Naive thymus-derived CD4-positive, alpha-beta T cell (primary cell): ENCODE measurements at regions of chr20 and their contacts with region 1.

Region 1: GRCh38 chr20:3156811-3157619 is 2.6 kb downstream of the FASTKD5 start:
- DNase-seq: peak in 7 of 9 donors; percentile 34 to 70 (median 57)
- ATAC-seq: peak; percentile 86
- H3K4me3 ChIP-seq: peak overlapping the region; percentile 27
- H3K4me3 Mint-ChIP-seq: peak overlapping the region; percentile 69 to 99 (median 86)
- H3K27ac ChIP-seq: peak overlapping the region; percentile 50
- H3K27ac Mint-ChIP-seq: peak overlapping the region; percentile 81 to 99 (median 89)
- H3K4me1 ChIP-seq: peaks cover 18 to 35% of the 10 kb centered on the region in 2 donors
- H3K4me1 Mint-ChIP-seq: peaks cover 46 to 82% (median 67%) of the 10 kb centered on the region in 7 donors
- H3K27me3 ChIP-seq: no peaks in the 10 kb centered on the region
- H3K27me3 Mint-ChIP-seq: no peaks in the 10 kb centered on the region

Region 2: GRCh38 chr20:2101865-2102584 is 1055.0 kb before region 1 on chr20:
- CTCF ChIA-PET with region 1: no interaction called
- POLR2A ChIA-PET with region 1: no interaction called
- intact Hi-C with region 1: loop called in 1 of 2 experiments (anchors 5 kb)
- DNase-seq: peak; percentile 82 to 94 (median 92)
- ATAC-seq: peak; percentile 88
- H3K4me3 ChIP-seq: peak overlapping the region; percentile 88
- H3K4me3 Mint-ChIP-seq: peak overlapping the region; percentile 90 to 97 (median 96)
- H3K27ac ChIP-seq: peak overlapping the region; percentile 96
- H3K27ac Mint-ChIP-seq: peak overlapping the region; percentile 99 to 100 (median 100)
- H3K4me1 ChIP-seq: peaks cover 29 to 38% of the 10 kb centered on the region in 2 donors
- H3K4me1 Mint-ChIP-seq: peaks cover 36 to 58% (median 44%) of the 10 kb centered on the region in 7 donors
- H3K27me3 ChIP-seq: no peaks in the 10 kb centered on the region
- H3K27me3 Mint-ChIP-seq: peaks cover 0 to 4% (median 0%) of the 10 kb centered on the region in 5 donors

Region 3: GRCh38 chr20:3037654-3038053 is 119.4 kb before region 1 on chr20:
- CTCF ChIA-PET with region 1: no interaction called
- POLR2A ChIA-PET with region 1: no interaction called
- intact Hi-C with region 1: no loop called
- DNase-seq: no peak
- ATAC-seq: no peak
- H3K4me3 ChIP-seq: no peak overlapping the region
- H3K4me3 Mint-ChIP-seq: no peak overlapping the region
- H3K27ac ChIP-seq: no peak overlapping the region
- H3K27ac Mint-ChIP-seq: no peak overlapping the region
- H3K4me1 ChIP-seq: no peaks in the 10 kb centered on the region
- H3K4me1 Mint-ChIP-seq: peaks cover 0 to 15% (median 4%) of the 10 kb centered on the region in 7 donors
- H3K27me3 ChIP-seq: no peaks in the 10 kb centered on the region
- H3K27me3 Mint-ChIP-seq: no peaks in the 10 kb centered on the region

Region 4: GRCh38 chr20:3059489-3059888 is 97.5 kb before region 1 on chr20:
- CTCF ChIA-PET with region 1: no interaction called
- POLR2A ChIA-PET with region 1: interaction called, 11 read pairs
- intact Hi-C with region 1: no loop called
- DNase-seq: no peak
- ATAC-seq: no peak
- H3K4me3 ChIP-seq: no peak overlapping the region
- H3K4me3 Mint-ChIP-seq: no peak overlapping the region
- H3K27ac ChIP-seq: no peak overlapping the region
- H3K27ac Mint-ChIP-seq: no peak overlapping the region
- H3K4me1 ChIP-seq: no peaks in the 10 kb centered on the region
- H3K4me1 Mint-ChIP-seq: peaks cover 0 to 21% (median 16%) of the 10 kb centered on the region in 7 donors
- H3K27me3 ChIP-seq: no peaks in the 10 kb centered on the region
- H3K27me3 Mint-ChIP-seq: no peaks in the 10 kb centered on the region

Region 5: DNA sequence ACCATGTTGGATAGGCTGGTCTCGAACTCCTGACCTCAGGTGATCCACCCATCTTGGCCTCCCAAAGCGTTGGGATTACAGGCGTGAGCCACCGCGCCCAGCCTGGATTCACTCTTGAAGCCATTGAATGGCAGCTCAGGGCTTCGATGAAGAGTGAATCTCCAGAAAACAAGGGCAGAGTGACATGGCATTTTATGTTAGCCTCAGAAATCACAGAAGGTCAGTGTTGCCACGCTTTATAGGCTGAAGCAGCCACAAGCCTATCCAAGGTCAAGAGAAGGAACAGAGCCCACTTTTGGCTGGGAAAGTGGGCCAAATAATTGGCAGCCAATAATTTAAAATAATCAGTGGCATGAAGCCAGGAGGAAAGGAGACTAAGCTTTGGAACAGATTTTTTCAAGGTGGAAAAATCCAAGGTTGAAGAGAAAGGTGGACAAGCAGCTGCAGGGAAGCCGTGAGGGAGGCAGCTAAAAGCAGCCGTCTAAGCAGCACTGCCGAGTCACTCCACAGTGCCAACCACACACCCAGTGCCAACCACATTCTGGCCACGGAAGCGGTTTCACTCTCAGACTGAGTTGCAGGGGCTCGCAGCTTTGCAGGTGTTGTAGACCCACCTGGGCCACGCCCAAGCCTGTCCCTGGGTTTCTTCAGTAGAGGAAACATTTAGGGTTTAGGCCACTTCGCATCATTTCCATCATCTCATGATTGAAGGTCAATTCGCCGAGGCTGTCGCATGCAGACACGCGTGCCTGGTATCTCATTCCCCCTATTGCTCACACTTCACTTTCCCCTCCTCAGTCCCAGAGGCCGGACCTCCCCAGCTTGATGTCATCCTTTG is 55.1 kb before region 1 on chr20:
- CTCF ChIA-PET with region 1: no interaction called
- POLR2A ChIA-PET with region 1: interaction called, 10 read pairs
- intact Hi-C with region 1: no loop called
- DNase-seq: peak in 8 of 9 donors; percentile 27 to 56 (median 46)
- ATAC-seq: peak; percentile 86
- H3K4me3 ChIP-seq: no peak overlapping the region
- H3K4me3 Mint-ChIP-seq: peak overlapping the region in 9 of 10 donors; percentile 29 to 80 (median 45)
- H3K27ac ChIP-seq: no peak overlapping the region
- H3K27ac Mint-ChIP-seq: peak overlapping the region in 8 of 9 donors; percentile 52 to 91 (median 75)
- H3K4me1 ChIP-seq: peaks cover 10 to 21% of the 10 kb centered on the region in 2 donors
- H3K4me1 Mint-ChIP-seq: peaks cover 15 to 26% (median 24%) of the 10 kb centered on the region in 7 donors
- H3K27me3 ChIP-seq: no peaks in the 10 kb centered on the region
- H3K27me3 Mint-ChIP-seq: no peaks in the 10 kb centered on the region

Region 6: GRCh38 chr20:3146732-3147341 is 10.2 kb before region 1 on chr20:
- CTCF ChIA-PET with region 1: interaction called, 3 read pairs
- POLR2A ChIA-PET with region 1: interaction called, 17 read pairs
- intact Hi-C with region 1: no loop called
- DNase-seq: no peak
- ATAC-seq: no peak
- H3K4me3 ChIP-seq: no peak overlapping the region
- H3K4me3 Mint-ChIP-seq: no peak overlapping the region
- H3K27ac ChIP-seq: no peak overlapping the region
- H3K27ac Mint-ChIP-seq: no peak overlapping the region
- H3K4me1 ChIP-seq: no peaks in the 10 kb centered on the region
- H3K4me1 Mint-ChIP-seq: peaks cover 25 to 65% (median 57%) of the 10 kb centered on the region in 7 donors
- H3K27me3 ChIP-seq: no peaks in the 10 kb centered on the region
- H3K27me3 Mint-ChIP-seq: no peaks in the 10 kb centered on the region

Region 7: GRCh38 chr20:3209257-3209945 is 52.4 kb after region 1 on chr20 and contains the start of gene ITPA:
- CTCF ChIA-PET with region 1: no interaction called
- POLR2A ChIA-PET with region 1: interaction called, 5 read pairs
- intact Hi-C with region 1: loop called (anchors 1 kb)
- DNase-seq: peak; percentile 26 to 67 (median 42)
- ATAC-seq: peak; percentile 44
- H3K4me3 ChIP-seq: peak within 1 kb of the TSS; percentile 94
- H3K4me3 Mint-ChIP-seq: peak within 1 kb of the TSS; percentile 85 to 100 (median 96)
- H3K27ac ChIP-seq: peak within 1 kb of the TSS; percentile 85
- H3K27ac Mint-ChIP-seq: peak within 1 kb of the TSS; percentile 85 to 99 (median 94)
- H3K4me1 ChIP-seq: peaks cover 8 to 14% of the 10 kb centered on the region in 2 donors
- H3K4me1 Mint-ChIP-seq: peaks cover 20 to 38% (median 31%) of the 10 kb centered on the region in 7 donors
- H3K27me3 ChIP-seq: no peaks in the 10 kb centered on the region
- H3K27me3 Mint-ChIP-seq: no peaks in the 10 kb centered on the region
- total RNA-seq, gene ITPA: 37.7 to 71.2 (median 43.5) TPM